ENCODE measurements at regions of chr5 and their contacts with region 1.

Region 1: DNA sequence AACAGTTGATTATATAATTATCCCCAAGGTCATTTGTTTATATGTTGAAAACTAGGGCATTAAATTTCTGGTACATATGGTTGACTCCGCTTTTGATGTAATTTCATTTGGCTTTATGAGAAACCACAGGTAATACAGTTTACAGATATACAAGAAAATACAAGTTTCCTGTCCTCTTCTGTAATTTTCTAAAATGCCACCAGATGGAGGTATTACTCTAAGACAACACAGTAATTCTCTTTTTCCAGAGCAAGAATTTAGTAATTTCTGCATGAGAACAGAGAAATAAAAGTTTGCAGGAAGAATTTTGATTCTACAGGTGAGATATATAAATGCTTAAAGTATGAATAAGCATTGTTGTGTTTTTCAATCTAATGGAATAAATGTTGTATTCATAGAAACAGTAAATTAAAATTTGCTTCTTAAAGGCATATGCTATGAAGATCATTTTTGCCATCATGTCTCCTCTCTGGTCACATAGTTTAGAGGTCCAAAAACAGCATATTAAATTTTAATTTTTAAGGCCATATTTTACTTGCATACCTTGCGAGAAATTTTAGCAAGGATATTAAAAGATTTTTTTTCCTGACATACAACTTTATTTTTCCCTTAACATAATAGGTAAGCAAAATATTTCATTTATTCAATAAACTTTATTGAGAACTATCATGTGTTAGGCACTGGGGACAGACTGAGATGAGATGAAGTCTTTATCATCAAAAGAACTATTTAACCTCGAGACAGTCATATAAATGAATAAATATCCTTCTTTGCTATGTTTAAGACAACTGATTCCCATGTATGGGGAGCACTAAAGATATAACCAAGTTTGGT is 22.7 kb downstream of the CHD1 start:
- DNase-seq: no peak
- H3K4me3 ChIP-seq: no peak overlapping the region
- H3K27ac ChIP-seq: peak overlapping the region in 1 of 8 donors; percentile 8
- H3K4me1 ChIP-seq: peaks cover 3 to 74% (median 44%) of the 10 kb centered on the region in 6 donors
- H3K27me3 ChIP-seq: no peaks in the 10 kb centered on the region
- CTCF ChIP-seq: peak; percentile 46 to 87 (median 79)
- POLR2A ChIP-seq: no peak

Region 2: GRCh38 chr5:99032234-99033013 is 126.3 kb after region 1 on chr5:
- intact Hi-C with region 1: loop called (anchors 5 kb)
- DNase-seq: no peak
- H3K4me3 ChIP-seq: peak overlapping the region in 7 of 8 donors; percentile 0 to 61 (median 31)
- H3K27ac ChIP-seq: peak overlapping the region; percentile 74 to 87 (median 82)
- H3K4me1 ChIP-seq: peaks cover 23 to 75% (median 48%) of the 10 kb centered on the region in 6 donors
- H3K27me3 ChIP-seq: no peaks in the 10 kb centered on the region
- CTCF ChIP-seq: peak; percentile 34 to 80 (median 67)
- POLR2A ChIP-seq: no peak

Region 3: GRCh38 chr5:99059685-99060084 is 153.6 kb after region 1 on chr5:
- intact Hi-C with region 1: loop called (anchors 5 kb)
- DNase-seq: no peak
- H3K4me3 ChIP-seq: no peak overlapping the region
- H3K27ac ChIP-seq: no peak overlapping the region
- H3K4me1 ChIP-seq: peaks cover 7 to 39% (median 23%) of the 10 kb centered on the region in 6 donors
- H3K27me3 ChIP-seq: no peaks in the 10 kb centered on the region
- CTCF ChIP-seq: no peak
- POLR2A ChIP-seq: no peak